ENCODE measurements at regions of chr16 and their contacts with region 1.

Region 1: GRCh38 chr16:53166099-53166498 is 111.3 kb downstream of the CHD9 start:
- DNase-seq: no peak
- ATAC-seq: no peak
- H3K4me3 ChIP-seq: no peak overlapping the region
- H3K27ac ChIP-seq: no peak overlapping the region
- H3K4me1 ChIP-seq: peaks cover 16 to 33% of the 10 kb centered on the region in 2 donors
- H3K27me3 ChIP-seq: no peaks in the 10 kb centered on the region
- CTCF ChIP-seq: no peak
- POLR2A ChIP-seq: no peak

Region 2: GRCh38 chr16:53202398-53202797 is 36.3 kb after region 1 on chr16:
- in situ Hi-C with region 1: no loop called
- intact Hi-C with region 1: loop called (anchors 5 kb)
- DNase-seq: no peak
- ATAC-seq: no peak
- H3K4me3 ChIP-seq: no peak overlapping the region
- H3K27ac ChIP-seq: no peak overlapping the region
- H3K4me1 ChIP-seq: peaks cover 28 to 33% of the 10 kb centered on the region in 2 donors
- H3K27me3 ChIP-seq: no peaks in the 10 kb centered on the region
- CTCF ChIP-seq: no peak
- POLR2A ChIP-seq: no peak